Sigmoid colon (tissue), 7 donors: ENCODE measurements at regions of chr10 and their contacts with region 1.

Region 1: GRCh38 chr10:373522-374309 is 238.5 kb downstream of the ZMYND11 start:
- DNase-seq: peak; percentile 84
- H3K4me3 ChIP-seq: no peak overlapping the region
- H3K27ac ChIP-seq: peak overlapping the region in 3 of 4 donors; percentile 70 to 91 (median 80)
- H3K4me1 ChIP-seq: peaks cover 0 to 74% (median 66%) of the 10 kb centered on the region in 4 donors
- H3K27me3 ChIP-seq: no peaks in the 10 kb centered on the region
- CTCF ChIP-seq: no peak
- EP300 ChIP-seq: peak in 3 of 4 donors; percentile 4 to 88 (median 84)
- POLR2A ChIP-seq: no peak

Region 2: GRCh38 chr10:329361-330099 is 44.2 kb before region 1 on chr10:
- intact Hi-C with region 1: loop called (anchors 5 kb)
- DNase-seq: peak; percentile 96
- H3K4me3 ChIP-seq: no peak overlapping the region
- H3K27ac ChIP-seq: peak overlapping the region; percentile 65 to 78 (median 72)
- H3K4me1 ChIP-seq: peaks cover 0 to 13% (median 6%) of the 10 kb centered on the region in 4 donors
- H3K27me3 ChIP-seq: no peaks in the 10 kb centered on the region
- CTCF ChIP-seq: no peak
- EP300 ChIP-seq: no peak
- POLR2A ChIP-seq: no peak

Region 3: GRCh38 chr10:470338-470999 is 96.8 kb after region 1 on chr10:
- intact Hi-C with region 1: no loop called
- DNase-seq: no peak
- H3K4me3 ChIP-seq: no peak overlapping the region
- H3K27ac ChIP-seq: no peak overlapping the region
- H3K4me1 ChIP-seq: peaks cover 0 to 3% (median 0%) of the 10 kb centered on the region in 4 donors
- H3K27me3 ChIP-seq: no peaks in the 10 kb centered on the region
- CTCF ChIP-seq: no peak
- EP300 ChIP-seq: no peak
- POLR2A ChIP-seq: no peak